AG04449 (cell line): ENCODE measurements at regions of chr16 and their contacts with region 1.

Region 1: GRCh38 chr16:30984669-30985400 is at the start of gene HSD3B7:
- DNase-seq: no peak
- H3K4me3 ChIP-seq: peak within 1 kb of the TSS; percentile 57
- CTCF ChIP-seq: peak; percentile 94

Region 2: GRCh38 chr16:30997000-30997886 is 12.4 kb after region 1 on chr16:
- CTCF ChIA-PET with region 1: interaction called, 49 read pairs
- POLR2A ChIA-PET with region 1: interaction called, 5 read pairs
- DNase-seq: no peak
- H3K4me3 ChIP-seq: peak overlapping the region; percentile 59
- CTCF ChIP-seq: no peak

Region 3: GRCh38 chr16:31042866-31043265 is 58.0 kb after region 1 on chr16:
- CTCF ChIA-PET with region 1: interaction called, 13 read pairs
- POLR2A ChIA-PET with region 1: no interaction called
- DNase-seq: no peak
- H3K4me3 ChIP-seq: no peak overlapping the region
- CTCF ChIP-seq: no peak

Region 4: DNA sequence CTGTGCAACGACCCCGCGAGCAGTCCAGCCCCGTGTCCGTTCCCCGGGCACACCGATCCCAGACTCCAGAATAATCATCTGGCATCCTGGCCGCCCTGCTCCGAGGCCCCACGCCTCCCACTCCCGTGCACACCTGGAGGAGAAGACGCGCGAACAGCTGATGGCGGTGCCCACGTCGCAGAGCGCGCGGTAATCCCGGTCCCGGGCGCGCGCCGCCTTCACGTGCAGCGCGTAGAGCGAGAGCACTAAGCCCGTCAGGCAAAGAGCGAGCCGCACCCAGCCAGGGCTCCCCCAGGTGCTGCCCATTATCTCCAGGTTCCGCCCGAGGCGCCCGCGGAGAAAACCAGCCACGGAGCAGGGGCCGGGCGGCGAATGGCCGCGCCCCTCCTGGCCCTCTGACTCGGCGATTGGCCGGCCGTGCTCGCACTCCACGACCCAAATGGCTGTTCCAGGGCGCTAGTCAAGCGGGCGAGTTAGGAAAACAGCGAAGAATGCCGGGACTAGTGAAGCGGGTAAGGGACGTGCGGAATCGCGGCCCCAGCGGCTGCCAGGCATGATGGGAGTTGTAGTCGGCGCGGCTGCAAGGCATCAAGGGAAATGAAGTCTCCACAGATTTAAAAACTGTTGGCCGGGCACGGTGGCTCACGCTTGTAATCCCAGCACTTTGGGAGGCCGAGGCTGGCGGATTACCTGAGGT is 109.7 kb after region 1 on chr16 and contains the start of gene VKORC1:
- CTCF ChIA-PET with region 1: interaction called, 141 read pairs
- POLR2A ChIA-PET with region 1: no interaction called
- DNase-seq: peak; percentile 78
- H3K4me3 ChIP-seq: peak within 1 kb of the TSS; percentile 95
- CTCF ChIP-seq: no peak

Region 5: DNA sequence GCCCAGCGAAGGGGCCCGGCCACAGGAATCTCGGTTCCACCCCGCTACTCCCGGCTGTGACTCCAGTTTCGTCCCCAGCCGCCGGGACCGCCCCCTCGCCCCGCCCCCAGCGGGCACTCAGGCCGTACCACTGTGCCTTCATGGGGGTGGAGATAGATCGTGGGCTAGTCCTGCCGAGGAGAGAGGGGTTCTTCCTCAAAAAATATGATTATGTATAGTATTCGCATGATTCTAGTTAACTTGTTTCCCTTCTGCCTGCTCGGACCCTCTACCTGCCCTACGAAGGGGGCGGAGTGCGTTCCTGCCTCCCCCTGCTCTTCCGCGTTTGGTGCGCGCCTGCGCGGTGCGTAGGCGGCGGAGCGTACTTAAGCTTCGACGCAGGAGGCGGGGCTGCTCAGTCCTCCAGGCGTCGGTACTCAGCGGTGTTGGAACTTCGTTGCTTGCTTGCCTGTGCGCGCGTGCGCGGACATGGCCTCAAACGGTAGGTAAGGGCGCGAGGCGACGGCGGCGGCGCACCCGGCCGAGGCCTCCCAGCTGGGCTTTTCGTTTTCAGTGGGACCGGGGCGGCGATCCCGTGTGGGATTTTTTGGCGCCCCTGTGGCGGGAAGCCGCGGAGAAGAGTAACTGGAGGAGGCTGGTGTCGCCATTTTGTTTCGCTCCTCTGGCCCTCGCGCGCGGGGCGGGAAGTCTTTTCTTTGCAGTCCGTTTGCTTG is 195.1 kb after region 1 on chr16 and contains the start of gene FUS:
- CTCF ChIA-PET with region 1: no interaction called
- POLR2A ChIA-PET with region 1: interaction called, 13 read pairs
- DNase-seq: peak; percentile 47
- H3K4me3 ChIP-seq: peak within 1 kb of the TSS; percentile 95
- CTCF ChIP-seq: no peak

Region 6: DNA sequence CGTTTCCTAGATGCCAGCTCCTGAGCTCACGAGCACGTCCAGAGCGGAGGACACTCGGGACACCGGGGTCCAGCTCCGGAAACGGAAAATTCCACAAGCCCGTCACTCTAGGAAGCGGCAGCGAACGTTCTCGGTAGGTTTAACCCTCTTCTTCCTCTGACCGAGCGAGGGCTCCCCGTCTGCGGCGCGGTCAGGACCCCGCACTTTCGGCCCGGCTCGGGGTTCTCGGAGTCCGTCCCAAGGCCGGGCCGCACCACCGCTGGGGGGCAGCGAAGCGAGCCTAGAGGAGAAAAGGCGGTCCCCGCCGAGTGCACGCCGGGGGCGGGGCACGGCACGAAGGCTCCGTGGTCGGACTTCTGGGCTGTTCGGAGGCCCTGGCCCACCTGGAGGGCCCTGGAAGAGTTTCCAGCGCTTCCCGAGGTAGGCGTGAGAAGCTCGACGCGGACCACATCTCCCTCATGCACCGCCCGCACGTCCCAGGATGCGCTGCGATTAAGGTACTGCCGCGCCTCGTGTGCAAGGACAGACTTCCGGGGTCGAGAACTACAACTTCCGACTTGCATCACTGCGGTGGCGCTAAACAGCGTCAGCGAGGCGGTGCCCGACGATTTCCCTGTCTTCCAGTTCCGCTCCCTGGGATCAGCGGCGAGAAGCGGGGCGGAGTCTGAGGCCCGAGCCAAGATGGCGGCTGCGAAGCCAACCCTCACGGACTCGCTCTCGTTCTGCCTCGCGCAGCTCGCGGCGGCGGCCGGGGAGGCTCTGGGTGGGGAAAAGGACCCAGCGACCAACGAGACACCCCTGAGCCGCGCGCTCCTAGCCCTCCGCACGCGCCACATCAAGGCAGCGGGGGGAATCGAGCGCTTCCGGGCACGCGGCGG is 474.2 kb after region 1 on chr16 and contains the start of gene ARMC5:
- CTCF ChIA-PET with region 1: interaction called, 10 read pairs
- POLR2A ChIA-PET with region 1: no interaction called
- DNase-seq: peak; percentile 90
- H3K4me3 ChIP-seq: peak within 1 kb of the TSS; percentile 64
- CTCF ChIP-seq: peak; percentile 79